Activated naive CD8-positive, alpha-beta T cell treated with anti-CD3 and anti-CD28 coated beads, Interleukin-2, amount 10 ng/mL, durations not matched to agents 7 days and 5 days (primary cell): ENCODE measurements at regions of chr7 and their contacts with region 1.

Region 1: DNA sequence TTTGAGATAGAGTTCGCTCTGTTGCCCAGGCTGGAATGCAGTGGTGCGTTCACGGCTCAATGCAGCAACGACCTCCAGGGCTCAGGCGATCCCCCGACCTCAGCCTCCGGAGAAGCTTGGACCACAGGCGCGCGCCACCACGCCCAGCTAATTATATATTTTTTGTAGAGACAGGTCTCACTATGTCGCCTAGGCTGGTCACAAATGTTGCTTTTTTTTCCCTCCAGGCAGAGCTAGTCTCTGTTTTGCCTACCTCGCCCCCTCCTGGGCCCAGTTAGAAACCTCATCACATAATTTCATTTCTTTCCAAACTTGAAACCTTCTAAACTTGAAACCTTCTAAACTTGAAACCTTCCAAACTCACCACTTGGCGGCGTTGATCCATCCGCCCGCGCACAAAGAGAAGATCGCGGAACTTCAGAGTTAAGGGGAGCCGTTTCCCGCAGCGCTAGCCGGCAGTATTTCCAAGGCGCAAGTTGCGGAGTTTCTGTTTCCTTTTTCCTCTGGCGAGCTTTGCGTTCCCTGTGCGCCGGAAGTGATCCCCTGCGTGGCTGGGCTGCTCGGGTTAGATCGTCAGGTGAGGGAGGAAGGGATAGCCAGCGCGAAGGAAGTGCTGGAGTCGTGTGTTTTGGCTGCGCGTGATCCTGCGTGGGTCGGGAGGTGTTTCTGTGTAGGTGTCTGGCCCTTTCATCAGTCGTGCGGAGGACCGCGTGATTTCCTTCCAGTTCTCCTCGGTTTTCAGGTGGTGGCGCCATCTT is at the start of gene SSBP1:
- DNase-seq: peak; percentile 87
- ATAC-seq: peak; percentile 91
- H3K4me3 Mint-ChIP-seq: peak within 1 kb of the TSS; percentile 94
- H3K27ac Mint-ChIP-seq: peak within 1 kb of the TSS; percentile 96
- H3K4me1 Mint-ChIP-seq: peaks cover 21% of the 10 kb centered on the region
- H3K27me3 Mint-ChIP-seq: no peaks in the 10 kb centered on the region
- total RNA-seq, gene SSBP1: 106 to 117 TPM

Region 2: GRCh38 chr7:141551094-141551781 is 186.8 kb before region 1 on chr7 and contains the start of gene AGK:
- POLR2A ChIA-PET with region 1: interaction called, 10 read pairs
- DNase-seq: peak; percentile 88
- ATAC-seq: peak; percentile 96
- H3K4me3 Mint-ChIP-seq: peak within 1 kb of the TSS; percentile 89
- H3K27ac Mint-ChIP-seq: peak within 1 kb of the TSS; percentile 88
- H3K4me1 Mint-ChIP-seq: peaks cover 31% of the 10 kb centered on the region
- H3K27me3 Mint-ChIP-seq: peaks cover 2% of the 10 kb centered on the region
- total RNA-seq, gene AGK: 39.9 to 40.3 TPM

Region 3: GRCh38 chr7:141654551-141654950 is 83.5 kb before region 1 on chr7:
- POLR2A ChIA-PET with region 1: interaction called, 16 read pairs
- DNase-seq: no peak
- ATAC-seq: peak; percentile 96
- H3K4me3 Mint-ChIP-seq: no peak overlapping the region
- H3K27ac Mint-ChIP-seq: peak overlapping the region; percentile 77
- H3K4me1 Mint-ChIP-seq: peaks cover 6% of the 10 kb centered on the region
- H3K27me3 Mint-ChIP-seq: no peaks in the 10 kb centered on the region

Region 4: DNA sequence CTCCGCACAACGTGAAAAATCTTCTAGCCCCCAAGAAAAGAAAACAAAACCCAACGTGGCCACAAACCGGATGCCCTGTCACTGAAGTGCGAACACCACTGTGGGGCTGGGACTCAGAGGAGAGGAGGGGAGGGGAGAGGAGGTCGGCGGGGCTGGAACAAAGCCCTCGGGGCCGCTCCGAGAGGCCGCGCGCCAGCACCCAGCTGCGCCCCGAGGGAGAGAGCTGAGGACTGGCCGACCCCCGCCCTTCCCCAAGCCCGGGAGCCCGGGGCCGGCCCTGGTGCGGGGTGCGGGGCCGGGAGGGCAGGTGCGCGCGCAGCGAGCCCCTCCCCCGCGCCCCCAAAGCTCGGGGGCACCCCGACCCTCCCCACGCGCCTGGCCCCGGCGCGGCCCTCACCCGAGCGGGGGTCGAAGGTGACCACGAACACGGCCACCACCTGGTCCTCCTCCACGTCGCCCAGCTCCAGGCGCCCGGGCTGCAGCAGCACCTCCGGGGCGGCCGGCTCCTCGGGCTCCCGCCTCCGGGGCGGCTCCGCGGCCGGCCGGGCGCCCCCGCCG is 36.4 kb before region 1 on chr7:
- POLR2A ChIA-PET with region 1: interaction called, 36 read pairs
- DNase-seq: peak; percentile 77
- ATAC-seq: peak; percentile 86
- H3K4me3 Mint-ChIP-seq: peak overlapping the region; percentile 79
- H3K27ac Mint-ChIP-seq: peak overlapping the region; percentile 87
- H3K4me1 Mint-ChIP-seq: peaks cover 34% of the 10 kb centered on the region
- H3K27me3 Mint-ChIP-seq: peaks cover 21% of the 10 kb centered on the region

Region 5: DNA sequence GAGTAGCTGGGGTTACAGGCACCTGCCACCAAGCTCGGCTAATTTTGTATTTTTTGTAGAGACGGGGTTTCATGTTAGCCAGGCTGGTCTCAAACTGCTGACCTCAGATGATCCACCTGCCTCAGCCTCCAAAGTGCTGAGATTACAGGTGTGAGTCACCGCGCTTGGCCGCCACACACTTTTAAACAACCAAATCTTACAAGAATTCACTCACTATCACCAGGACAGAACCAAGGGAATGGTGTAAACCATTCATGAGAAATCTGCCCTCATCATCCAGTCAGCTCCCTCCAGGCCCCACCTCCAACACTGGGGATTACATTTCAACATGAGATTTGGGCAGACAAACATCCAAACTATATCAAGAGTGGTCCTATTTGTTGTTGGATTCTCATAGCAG is 301.2 kb after region 1 on chr7:
- POLR2A ChIA-PET with region 1: no interaction called
- DNase-seq: no peak
- ATAC-seq: no peak
- H3K4me3 Mint-ChIP-seq: no peak overlapping the region
- H3K27ac Mint-ChIP-seq: no peak overlapping the region
- H3K4me1 Mint-ChIP-seq: no peaks in the 10 kb centered on the region
- H3K27me3 Mint-ChIP-seq: peaks cover 4% of the 10 kb centered on the region